CD8-positive, alpha-beta T cell (primary cell): ENCODE measurements at regions of chr2 and their contacts with region 1.

Region 1: DNA sequence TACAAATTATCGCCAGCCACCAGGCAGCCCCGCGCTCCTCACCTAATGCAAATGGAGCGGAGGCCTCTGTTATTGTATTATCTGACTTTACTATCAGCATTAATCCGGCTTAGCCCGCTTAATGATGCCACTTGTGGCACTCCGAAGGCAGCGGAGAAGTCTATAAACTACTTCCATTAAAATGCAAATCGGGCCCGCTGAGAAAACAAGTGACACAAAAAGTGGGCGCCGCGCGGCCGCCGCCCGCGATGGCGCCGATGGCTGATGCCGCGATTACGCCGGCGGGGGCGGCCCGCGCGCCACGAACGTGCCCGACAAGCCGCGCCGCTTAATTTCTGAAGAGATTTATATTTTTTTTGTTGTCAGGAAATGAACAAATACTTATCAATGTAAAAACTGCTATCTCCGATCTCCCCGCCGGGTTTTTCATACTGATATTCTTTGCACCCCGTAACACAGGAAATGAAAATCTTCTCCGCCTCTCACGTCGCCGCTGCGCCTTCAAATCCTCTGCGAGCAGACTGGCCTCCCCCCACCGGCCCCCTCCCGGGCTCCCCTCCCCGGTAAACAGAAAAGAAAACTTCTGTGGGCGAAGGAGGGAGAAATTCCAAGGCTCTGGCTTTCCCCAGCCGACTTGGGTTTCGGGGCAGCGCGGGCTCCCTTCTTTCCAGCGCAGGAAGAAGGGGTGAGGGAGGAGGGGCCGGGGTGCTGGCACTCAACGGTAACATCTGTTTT is 221.8 kb downstream of the INSIG2 start:
- DNase-seq: peak; percentile 22 to 77 (median 56)
- ATAC-seq: peak; percentile 75
- H3K4me3 ChIP-seq: peak overlapping the region; percentile 66 to 69
- H3K4me3 Mint-ChIP-seq: peak overlapping the region; percentile 88
- H3K27ac ChIP-seq: peak overlapping the region; percentile 81 to 88
- H3K27ac Mint-ChIP-seq: peak overlapping the region; percentile 97
- H3K4me1 ChIP-seq: peaks cover 8% of the 10 kb centered on the region
- H3K4me1 Mint-ChIP-seq: peaks cover 5% of the 10 kb centered on the region
- H3K27me3 ChIP-seq: no peaks in the 10 kb centered on the region
- H3K27me3 Mint-ChIP-seq: peaks cover 4% of the 10 kb centered on the region
- CTCF ChIP-seq: no peak

Region 2: GRCh38 chr2:118013724-118014491 is 296.2 kb before region 1 on chr2 and contains the start of gene CCDC93:
- CTCF ChIA-PET with region 1: no interaction called
- POLR2A ChIA-PET with region 1: no interaction called
- intact Hi-C with region 1: loop called in 1 of 2 experiments (anchors 5 kb)
- DNase-seq: peak; percentile 73 to 94 (median 86)
- ATAC-seq: peak; percentile 85
- H3K4me3 ChIP-seq: peak within 1 kb of the TSS; percentile 73 to 88
- H3K4me3 Mint-ChIP-seq: peak within 1 kb of the TSS; percentile 95
- H3K27ac ChIP-seq: peak within 1 kb of the TSS; percentile 93 to 95
- H3K27ac Mint-ChIP-seq: peak within 1 kb of the TSS; percentile 92
- H3K4me1 ChIP-seq: peaks cover 27% of the 10 kb centered on the region
- H3K4me1 Mint-ChIP-seq: peaks cover 47% of the 10 kb centered on the region
- H3K27me3 ChIP-seq: no peaks in the 10 kb centered on the region
- H3K27me3 Mint-ChIP-seq: peaks cover 3% of the 10 kb centered on the region
- CTCF ChIP-seq: no peak
- total RNA-seq, gene CCDC93: 84.4 to 85.3 TPM

Region 3: DNA sequence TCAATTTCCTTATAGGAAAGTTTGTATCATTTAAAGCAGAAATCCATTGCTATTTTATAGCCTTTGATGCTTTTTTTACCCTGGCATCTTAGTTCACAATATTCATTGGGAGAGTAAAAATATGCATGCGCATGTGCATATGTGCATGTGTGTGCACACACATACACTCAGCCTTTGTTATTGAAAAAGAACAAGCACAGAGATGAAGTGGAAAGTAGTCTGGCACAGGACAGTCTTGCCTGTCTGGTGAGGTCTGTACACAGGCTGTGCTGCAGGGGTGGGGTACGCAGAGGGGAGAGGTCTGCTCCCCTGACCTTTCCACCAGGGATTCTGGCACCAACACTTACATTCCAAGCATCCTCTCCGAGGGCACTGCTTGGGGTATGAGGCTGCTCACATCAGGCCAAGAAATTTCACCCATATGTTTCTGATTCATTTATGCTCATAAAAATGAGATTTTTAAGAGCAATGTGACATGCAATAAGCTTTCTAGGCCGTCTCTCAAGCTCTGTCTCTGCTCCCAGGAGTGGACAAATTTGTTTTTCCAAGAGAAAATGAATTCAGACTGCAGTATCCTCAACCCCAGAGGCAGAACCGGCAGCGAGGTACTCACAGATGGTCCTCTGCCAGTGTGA is 15.3 kb after region 1 on chr2:
- CTCF ChIA-PET with region 1: no interaction called
- POLR2A ChIA-PET with region 1: no interaction called
- intact Hi-C with region 1: no loop called
- DNase-seq: no peak
- ATAC-seq: no peak
- H3K4me3 ChIP-seq: no peak overlapping the region
- H3K4me3 Mint-ChIP-seq: no peak overlapping the region
- H3K27ac ChIP-seq: no peak overlapping the region
- H3K27ac Mint-ChIP-seq: no peak overlapping the region
- H3K4me1 ChIP-seq: no peaks in the 10 kb centered on the region
- H3K4me1 Mint-ChIP-seq: no peaks in the 10 kb centered on the region
- H3K27me3 ChIP-seq: no peaks in the 10 kb centered on the region
- H3K27me3 Mint-ChIP-seq: peaks cover 26% of the 10 kb centered on the region
- CTCF ChIP-seq: no peak

Region 4: GRCh38 chr2:118855451-118856279 is 545.6 kb after region 1 on chr2:
- CTCF ChIA-PET with region 1: no interaction called
- POLR2A ChIA-PET with region 1: no interaction called
- intact Hi-C with region 1: loop called in 1 of 2 experiments (anchors 10 kb)
- DNase-seq: peak; percentile 69 to 87 (median 79)
- ATAC-seq: peak; percentile 88
- H3K4me3 ChIP-seq: peak overlapping the region; percentile 23 to 53
- H3K4me3 Mint-ChIP-seq: peak overlapping the region; percentile 73
- H3K27ac ChIP-seq: no peak overlapping the region
- H3K27ac Mint-ChIP-seq: no peak overlapping the region
- H3K4me1 ChIP-seq: peaks cover 27% of the 10 kb centered on the region
- H3K4me1 Mint-ChIP-seq: peaks cover 18% of the 10 kb centered on the region
- H3K27me3 ChIP-seq: peaks cover 47 to 57% of the 10 kb centered on the region in 2 experiments
- H3K27me3 Mint-ChIP-seq: peaks cover 65% of the 10 kb centered on the region
- CTCF ChIP-seq: peak; percentile 85